ENCODE measurements at regions of chr7 and their contacts with region 1.

Region 1: GRCh38 chr7:55964261-55965099 is at the start of gene NIPSNAP2:
- DNase-seq: peak; percentile 55
- H3K4me3 Mint-ChIP-seq: peak within 1 kb of the TSS; percentile 88
- H3K27ac Mint-ChIP-seq: peak within 1 kb of the TSS; percentile 89
- H3K4me1 Mint-ChIP-seq: peaks cover 26% of the 10 kb centered on the region
- H3K27me3 Mint-ChIP-seq: no peaks in the 10 kb centered on the region
- total RNA-seq, gene NIPSNAP2: 49.4 and 50.0 TPM in 2 replicates

Region 2: GRCh38 chr7:54874804-54875203 is 1089.7 kb before region 1 on chr7:
- intact Hi-C with region 1: no loop called
- DNase-seq: no peak
- H3K4me3 Mint-ChIP-seq: no peak overlapping the region
- H3K27ac Mint-ChIP-seq: no peak overlapping the region
- H3K4me1 Mint-ChIP-seq: no peaks in the 10 kb centered on the region
- H3K27me3 Mint-ChIP-seq: peaks cover 7% of the 10 kb centered on the region

Region 3: GRCh38 chr7:55774326-55775064 is 190.0 kb before region 1 on chr7:
- intact Hi-C with region 1: no loop called
- DNase-seq: no peak
- H3K4me3 Mint-ChIP-seq: no peak overlapping the region
- H3K27ac Mint-ChIP-seq: no peak overlapping the region
- H3K4me1 Mint-ChIP-seq: no peaks in the 10 kb centered on the region
- H3K27me3 Mint-ChIP-seq: no peaks in the 10 kb centered on the region

Region 4: GRCh38 chr7:55951637-55952351 is 12.7 kb before region 1 on chr7 and contains the start of gene MRPS17:
- intact Hi-C with region 1: loop called (anchors 1 kb)
- DNase-seq: peak; percentile 92
- H3K4me3 Mint-ChIP-seq: peak within 1 kb of the TSS; percentile 92
- H3K27ac Mint-ChIP-seq: peak within 1 kb of the TSS; percentile 92
- H3K4me1 Mint-ChIP-seq: peaks cover 10% of the 10 kb centered on the region
- H3K27me3 Mint-ChIP-seq: no peaks in the 10 kb centered on the region
- total RNA-seq, gene MRPS17: 38.2 and 39.3 TPM in 2 replicates

Measured in activated T-helper 1 cell treated with anti-CD3 and anti-CD28 coated beads, Interleukin-12 subunit alpha, Interleukin-12 subunit beta, Interleukin-2, Interleukin-4 antibody, amounts not matched to agents 30 ng/mL and 10 ng/mL and 1 ng/mL, durations not matched to agents 14 hours and 24 hours and 36 hours (primary cell).